HCT116 (cell line): ENCODE measurements at regions of chr1 and their contacts with region 1.

Region 1: DNA sequence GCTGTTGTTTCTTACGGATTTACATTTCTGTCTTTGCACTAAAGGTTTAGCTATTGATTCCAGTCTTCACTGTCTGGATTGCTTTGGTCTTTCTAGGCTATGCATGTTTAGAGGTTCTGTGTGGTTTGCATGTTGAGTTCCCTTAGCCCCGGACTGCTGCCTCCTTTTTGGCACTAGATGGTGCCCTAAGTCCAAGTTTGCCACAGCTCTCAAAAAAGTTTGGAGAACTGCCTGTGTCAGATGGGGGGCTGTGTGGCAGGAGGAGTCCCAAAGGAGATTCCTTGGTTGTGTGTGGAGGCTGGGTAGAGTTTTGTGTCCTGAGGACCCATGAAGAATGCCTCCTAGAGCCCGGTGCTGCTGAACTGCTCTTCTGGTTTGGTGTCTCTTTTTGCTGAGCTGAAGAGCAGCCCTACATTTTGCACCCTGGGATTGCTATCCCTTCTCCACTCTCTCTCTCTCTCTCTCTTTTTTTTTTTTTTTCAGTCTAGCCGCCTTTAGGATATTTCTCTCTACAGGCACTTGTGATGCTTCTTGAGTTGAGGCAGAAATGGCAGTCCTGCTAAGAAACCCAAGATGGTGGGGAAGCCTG is 74.4 kb downstream of the PTGS2 start:
- DNase-seq: peak; percentile 56
- ATAC-seq: peak; percentile 95
- H3K4me3 ChIP-seq: no peak overlapping the region
- H3K27ac ChIP-seq: no peak overlapping the region
- H3K4me1 ChIP-seq: no peaks in the 10 kb centered on the region
- H3K27me3 ChIP-seq: no peaks in the 10 kb centered on the region
- CTCF ChIP-seq: peak; percentile 67 to 89 (median 82); a peak in 5 of 6 replicates
- POLR2A ChIP-seq: no peak
- RAD21 ChIP-seq: peak; percentile 91

Region 2: DNA sequence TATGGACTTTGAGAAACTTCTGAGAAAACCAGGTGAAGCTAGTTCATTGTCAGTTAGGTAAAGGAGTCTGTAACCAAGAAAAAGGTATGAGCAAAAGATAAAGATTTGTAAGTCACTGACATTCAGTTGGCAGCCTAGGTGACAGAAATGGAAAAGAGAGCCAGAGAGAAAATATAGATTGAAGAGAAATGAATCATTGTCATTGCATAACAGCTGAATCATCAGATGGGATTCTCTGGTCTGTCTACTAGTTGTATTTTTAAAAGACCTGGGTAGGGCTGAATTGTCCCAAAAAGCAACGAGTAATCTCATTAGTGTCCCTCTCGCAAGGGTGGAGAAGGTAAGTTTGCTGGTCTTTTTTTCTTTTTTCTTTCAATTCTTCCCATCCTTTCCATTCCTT is 37.7 kb after region 1 on chr1:
- CTCF ChIA-PET with region 1: no interaction called
- POLR2A ChIA-PET with region 1: no interaction called
- RAD21 ChIA-PET with region 1: no interaction called
- intact Hi-C with region 1: no loop called
- DNase-seq: no peak
- ATAC-seq: no peak
- H3K4me3 ChIP-seq: no peak overlapping the region
- H3K27ac ChIP-seq: no peak overlapping the region
- H3K4me1 ChIP-seq: no peaks in the 10 kb centered on the region
- H3K27me3 ChIP-seq: no peaks in the 10 kb centered on the region
- CTCF ChIP-seq: no peak
- POLR2A ChIP-seq: no peak
- RAD21 ChIP-seq: no peak

Region 3: GRCh38 chr1:186680245-186681061 is 74.6 kb after region 1 on chr1 and contains the start of gene PTGS2:
- CTCF ChIA-PET with region 1: interaction called, 5 read pairs
- POLR2A ChIA-PET with region 1: no interaction called
- RAD21 ChIA-PET with region 1: no interaction called
- intact Hi-C with region 1: loop called (anchors 2 kb)
- DNase-seq: peak; percentile 84
- ATAC-seq: peak; percentile 99
- H3K4me3 ChIP-seq: peak within 1 kb of the TSS; percentile 56 to 72
- H3K27ac ChIP-seq: peak within 1 kb of the TSS; percentile 51
- H3K4me1 ChIP-seq: peaks cover 0 to 16% of the 10 kb centered on the region in 2 experiments; a peak in 3 of 4 replicates
- H3K27me3 ChIP-seq: no peaks in the 10 kb centered on the region
- CTCF ChIP-seq: peak; percentile 30 to 62 (median 59); a peak in 5 of 6 replicates
- POLR2A ChIP-seq: no peak
- RAD21 ChIP-seq: peak; percentile 17; the same call in 1 of the 2 replicates
- total RNA-seq, gene PTGS2: 0.91 TPM

Region 4: GRCh38 chr1:186806477-186806876 is 200.6 kb after region 1 on chr1:
- CTCF ChIA-PET with region 1: interaction called, 17 read pairs
- POLR2A ChIA-PET with region 1: no interaction called
- RAD21 ChIA-PET with region 1: no interaction called
- intact Hi-C with region 1: loop called (anchors 1 kb)
- DNase-seq: peak; percentile 45
- ATAC-seq: peak; percentile 82
- H3K4me3 ChIP-seq: no peak overlapping the region
- H3K27ac ChIP-seq: no peak overlapping the region
- H3K4me1 ChIP-seq: no peaks in the 10 kb centered on the region
- H3K27me3 ChIP-seq: no peaks in the 10 kb centered on the region
- CTCF ChIP-seq: peak; percentile 38 to 56 (median 45); a peak in 5 of 6 replicates
- POLR2A ChIP-seq: no peak
- RAD21 ChIP-seq: peak; percentile 74

Region 5: GRCh38 chr1:186948535-186948934 is 342.7 kb after region 1 on chr1:
- CTCF ChIA-PET with region 1: no interaction called
- POLR2A ChIA-PET with region 1: no interaction called
- RAD21 ChIA-PET with region 1: no interaction called
- intact Hi-C with region 1: no loop called
- DNase-seq: no peak
- ATAC-seq: no peak
- H3K4me3 ChIP-seq: no peak overlapping the region
- H3K27ac ChIP-seq: no peak overlapping the region
- H3K4me1 ChIP-seq: peaks cover 0 to 5% of the 10 kb centered on the region in 2 experiments; a peak in 1 of 4 replicates
- H3K27me3 ChIP-seq: no peaks in the 10 kb centered on the region
- CTCF ChIP-seq: no peak
- POLR2A ChIP-seq: no peak
- RAD21 ChIP-seq: no peak